CD4-positive, alpha-beta memory T cell (primary cell): ENCODE measurements at regions of chr17 and their contacts with region 1.

Region 1: GRCh38 chr17:42312285-42313130 is 24.2 kb downstream of the STAT5A start:
- DNase-seq: peak; percentile 69 to 80 (median 73)
- H3K4me3 ChIP-seq: peak overlapping the region in 1 of 2 donors; percentile 11
- H3K4me3 Mint-ChIP-seq: peak overlapping the region; percentile 37 to 80 (median 70)
- H3K27ac ChIP-seq: peak overlapping the region; percentile 46
- H3K27ac Mint-ChIP-seq: peak overlapping the region; percentile 75 to 89 (median 86)
- H3K4me1 ChIP-seq: peaks cover 70% of the 10 kb centered on the region
- H3K4me1 Mint-ChIP-seq: peaks cover 40 to 75% (median 53%) of the 10 kb centered on the region in 4 donors
- H3K27me3 ChIP-seq: no peaks in the 10 kb centered on the region
- H3K27me3 Mint-ChIP-seq: no peaks in the 10 kb centered on the region

Region 2: DNA sequence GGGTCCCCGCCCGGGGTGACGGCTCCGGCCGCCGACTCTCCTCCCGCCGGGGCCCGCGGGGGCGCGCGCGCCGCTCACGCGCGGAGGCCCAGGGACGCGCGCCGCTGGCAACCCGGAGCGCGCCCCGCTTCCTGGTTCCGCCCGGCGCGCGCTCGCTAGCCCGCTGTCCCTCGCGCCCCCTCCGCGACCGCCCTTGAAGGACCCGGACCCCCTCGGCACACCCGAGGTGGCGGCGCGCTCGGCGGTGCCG is 36.2 kb before region 1 on chr17 and contains the start of gene STAT5B:
- CTCF ChIA-PET with region 1: interaction called, 4 read pairs
- POLR2A ChIA-PET with region 1: interaction called, 59 read pairs
- intact Hi-C with region 1: loop called (anchors 5 kb)
- DNase-seq: peak in 4 of 5 donors; percentile 73 to 82 (median 76)
- H3K4me3 ChIP-seq: peak within 1 kb of the TSS; percentile 87 to 97
- H3K4me3 Mint-ChIP-seq: peak within 1 kb of the TSS; percentile 97 to 100 (median 98)
- H3K27ac ChIP-seq: peak within 1 kb of the TSS; percentile 92
- H3K27ac Mint-ChIP-seq: peak within 1 kb of the TSS; percentile 97 to 100 (median 99)
- H3K4me1 ChIP-seq: peaks cover 42% of the 10 kb centered on the region
- H3K4me1 Mint-ChIP-seq: peaks cover 31 to 58% (median 46%) of the 10 kb centered on the region in 4 donors
- H3K27me3 ChIP-seq: no peaks in the 10 kb centered on the region
- H3K27me3 Mint-ChIP-seq: no peaks in the 10 kb centered on the region
- total RNA-seq, gene STAT5B: 244 to 261 TPM

Region 3: DNA sequence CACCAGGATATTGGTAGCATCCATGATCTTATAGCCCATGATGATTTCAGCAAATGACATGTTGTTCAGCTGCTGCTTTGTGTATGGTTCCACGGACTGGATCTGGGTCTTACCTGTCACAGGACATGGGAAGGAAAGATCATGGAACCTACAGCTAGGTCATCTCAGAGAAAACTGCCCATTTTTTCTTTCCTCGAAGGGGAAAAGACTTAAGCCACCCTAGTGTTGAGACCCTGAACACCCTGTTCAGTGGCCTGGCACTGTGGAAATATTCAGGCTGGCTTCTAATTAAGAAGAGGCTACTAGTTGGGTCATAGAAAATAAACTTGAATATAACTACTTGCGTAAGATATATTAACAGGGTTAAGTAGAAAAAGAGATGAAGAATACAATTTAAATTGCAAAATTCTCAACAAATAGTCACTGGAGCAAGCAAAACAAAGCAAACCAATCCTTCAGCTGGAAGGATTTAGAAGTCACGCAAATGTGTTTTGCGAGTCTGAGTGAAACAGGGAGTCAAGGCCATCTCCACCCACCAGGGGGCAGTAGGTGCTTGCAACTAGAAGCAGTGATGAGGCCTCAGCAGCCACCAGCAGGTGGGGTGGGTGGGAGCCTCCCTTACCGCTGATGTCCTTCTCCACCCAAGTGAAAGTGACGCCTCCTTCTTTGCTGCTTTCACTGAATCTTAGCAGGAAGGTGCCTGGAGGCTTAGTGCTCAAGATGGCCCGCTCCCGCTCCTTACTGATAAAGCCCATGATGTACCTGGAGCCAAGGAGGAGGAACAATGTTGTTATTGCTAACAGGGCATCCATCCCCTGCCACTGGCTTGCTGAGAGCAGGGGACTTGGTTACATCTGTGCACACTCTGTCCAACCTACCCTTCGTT is 10.1 kb after region 1 on chr17:
- CTCF ChIA-PET with region 1: interaction called, 60 read pairs
- POLR2A ChIA-PET with region 1: interaction called, 8 read pairs
- intact Hi-C with region 1: loop called (anchors 1 kb)
- DNase-seq: peak; percentile 91 to 95 (median 91)
- H3K4me3 ChIP-seq: no peak overlapping the region
- H3K4me3 Mint-ChIP-seq: peak overlapping the region in 1 of 8 donors; percentile 6
- H3K27ac ChIP-seq: no peak overlapping the region
- H3K27ac Mint-ChIP-seq: peak overlapping the region; percentile 68 to 94 (median 81)
- H3K4me1 ChIP-seq: peaks cover 24% of the 10 kb centered on the region
- H3K4me1 Mint-ChIP-seq: peaks cover 18 to 44% (median 29%) of the 10 kb centered on the region in 4 donors
- H3K27me3 ChIP-seq: no peaks in the 10 kb centered on the region
- H3K27me3 Mint-ChIP-seq: no peaks in the 10 kb centered on the region

Region 4: DNA sequence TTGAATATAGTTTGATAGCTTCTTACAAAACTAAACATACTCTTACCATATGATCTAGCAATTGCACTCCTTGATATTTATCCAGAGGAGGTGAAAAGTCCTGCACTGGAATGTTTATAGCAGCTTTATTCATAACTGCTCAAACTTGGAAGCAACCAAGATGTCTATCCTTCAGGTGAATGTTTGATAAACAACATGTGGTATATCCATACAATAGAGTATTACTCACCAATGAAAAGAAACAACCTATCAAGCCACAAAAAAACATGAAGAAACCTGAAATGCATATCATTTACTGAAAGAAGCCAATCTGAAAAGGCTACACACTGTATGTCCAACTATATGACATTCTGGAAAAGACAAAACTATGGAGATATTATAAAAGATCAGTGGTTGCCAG is 59.6 kb after region 1 on chr17:
- CTCF ChIA-PET with region 1: no interaction called
- POLR2A ChIA-PET with region 1: no interaction called
- intact Hi-C with region 1: no loop called
- DNase-seq: no peak
- H3K4me3 ChIP-seq: no peak overlapping the region
- H3K4me3 Mint-ChIP-seq: no peak overlapping the region
- H3K27ac ChIP-seq: no peak overlapping the region
- H3K27ac Mint-ChIP-seq: no peak overlapping the region
- H3K4me1 ChIP-seq: peaks cover 32% of the 10 kb centered on the region
- H3K4me1 Mint-ChIP-seq: peaks cover 31 to 49% (median 40%) of the 10 kb centered on the region in 4 donors
- H3K27me3 ChIP-seq: no peaks in the 10 kb centered on the region
- H3K27me3 Mint-ChIP-seq: no peaks in the 10 kb centered on the region